ENCODE measurements at regions of chr4 and their contacts with region 1.

Region 1: GRCh38 chr4:147160908-147161513 is 215.3 kb upstream of the TTC29 start:
- DNase-seq: peak; percentile 63
- H3K4me3 Mint-ChIP-seq: no peak overlapping the region
- H3K27ac Mint-ChIP-seq: no peak overlapping the region
- H3K4me1 Mint-ChIP-seq: no peaks in the 10 kb centered on the region
- H3K27me3 Mint-ChIP-seq: no peaks in the 10 kb centered on the region
- CTCF ChIP-seq: peak; percentile 78

Region 2: GRCh38 chr4:147019061-147019460 is 141.9 kb before region 1 on chr4:
- CTCF ChIA-PET with region 1: interaction called, 18 read pairs
- POLR2A ChIA-PET with region 1: no interaction called
- intact Hi-C with region 1: loop called (anchors 2 kb)
- DNase-seq: peak; percentile 84
- H3K4me3 Mint-ChIP-seq: no peak overlapping the region
- H3K27ac Mint-ChIP-seq: no peak overlapping the region
- H3K4me1 Mint-ChIP-seq: peaks cover 26% of the 10 kb centered on the region
- H3K27me3 Mint-ChIP-seq: no peaks in the 10 kb centered on the region
- CTCF ChIP-seq: peak; percentile 89

Region 3: DNA sequence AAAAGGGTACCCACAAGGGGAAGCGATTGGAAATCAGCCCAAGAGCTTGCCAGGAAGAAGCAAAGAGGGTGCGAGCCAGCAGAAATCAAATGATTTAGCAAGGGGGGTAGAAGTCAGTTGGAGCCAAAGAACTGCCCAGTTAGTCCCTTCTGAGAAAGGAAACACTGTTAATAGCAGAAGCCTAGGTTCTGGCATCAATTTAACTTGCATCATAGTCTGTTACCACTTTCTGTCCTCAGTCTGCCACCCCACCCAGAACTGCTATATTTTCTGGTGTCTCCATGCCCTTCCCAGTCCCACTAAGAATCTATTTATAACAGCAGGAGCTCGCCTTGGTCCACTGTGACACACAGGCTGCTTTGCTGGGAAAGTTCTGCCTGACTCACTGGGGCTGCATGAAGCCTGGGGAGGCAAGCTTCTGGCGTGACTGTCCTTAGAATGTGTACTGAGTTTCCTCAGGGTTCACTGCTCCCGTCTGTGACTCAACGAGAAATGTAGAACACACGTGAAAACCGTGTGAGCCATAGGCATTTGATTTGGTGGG is 57.5 kb before region 1 on chr4:
- CTCF ChIA-PET with region 1: interaction called, 10 read pairs
- POLR2A ChIA-PET with region 1: no interaction called
- intact Hi-C with region 1: no loop called
- DNase-seq: peak; percentile 92
- H3K4me3 Mint-ChIP-seq: peak overlapping the region; percentile 1
- H3K27ac Mint-ChIP-seq: peak overlapping the region; percentile 97
- H3K4me1 Mint-ChIP-seq: peaks cover 18% of the 10 kb centered on the region
- H3K27me3 Mint-ChIP-seq: no peaks in the 10 kb centered on the region
- CTCF ChIP-seq: no peak

Region 4: GRCh38 chr4:147378779-147379178 is 217.8 kb after region 1 on chr4:
- CTCF ChIA-PET with region 1: interaction called, 13 read pairs
- POLR2A ChIA-PET with region 1: no interaction called
- intact Hi-C with region 1: loop called (anchors 1 kb)
- DNase-seq: peak; percentile 62
- H3K4me3 Mint-ChIP-seq: no peak overlapping the region
- H3K27ac Mint-ChIP-seq: no peak overlapping the region
- H3K4me1 Mint-ChIP-seq: no peaks in the 10 kb centered on the region
- H3K27me3 Mint-ChIP-seq: no peaks in the 10 kb centered on the region
- CTCF ChIP-seq: peak; percentile 19

Region 5: GRCh38 chr4:147596981-147597380 is 436.0 kb after region 1 on chr4:
- CTCF ChIA-PET with region 1: interaction called, 17 read pairs
- POLR2A ChIA-PET with region 1: interaction called, 4 read pairs
- intact Hi-C with region 1: no loop called
- DNase-seq: peak; percentile 94
- H3K4me3 Mint-ChIP-seq: no peak overlapping the region
- H3K27ac Mint-ChIP-seq: peak overlapping the region; percentile 97
- H3K4me1 Mint-ChIP-seq: peaks cover 35% of the 10 kb centered on the region
- H3K27me3 Mint-ChIP-seq: no peaks in the 10 kb centered on the region
- CTCF ChIP-seq: no peak